B cell (primary cell): ENCODE measurements at regions of chr20 and their contacts with region 1.

Region 1: GRCh38 chr20:62121776-62122631 is at the start of gene LSM14B:
- DNase-seq: peak; percentile 99
- ATAC-seq: peak; percentile 86
- H3K4me3 ChIP-seq: peak within 1 kb of the TSS; percentile 36 to 78 (median 62)
- H3K4me3 Mint-ChIP-seq: peak within 1 kb of the TSS; percentile 92
- H3K27ac ChIP-seq: peak within 1 kb of the TSS; percentile 65 to 91
- H3K27ac Mint-ChIP-seq: peak within 1 kb of the TSS; percentile 90
- H3K4me1 ChIP-seq: peaks cover 18 to 29% of the 10 kb centered on the region in 2 donors
- H3K4me1 Mint-ChIP-seq: peaks cover 21% of the 10 kb centered on the region
- H3K27me3 ChIP-seq: no peaks in the 10 kb centered on the region
- H3K27me3 Mint-ChIP-seq: peaks cover 2% of the 10 kb centered on the region
- CTCF ChIP-seq: no peak
- total RNA-seq, gene LSM14B: 52.8 and 55.0 TPM in 2 replicates

Region 2: DNA sequence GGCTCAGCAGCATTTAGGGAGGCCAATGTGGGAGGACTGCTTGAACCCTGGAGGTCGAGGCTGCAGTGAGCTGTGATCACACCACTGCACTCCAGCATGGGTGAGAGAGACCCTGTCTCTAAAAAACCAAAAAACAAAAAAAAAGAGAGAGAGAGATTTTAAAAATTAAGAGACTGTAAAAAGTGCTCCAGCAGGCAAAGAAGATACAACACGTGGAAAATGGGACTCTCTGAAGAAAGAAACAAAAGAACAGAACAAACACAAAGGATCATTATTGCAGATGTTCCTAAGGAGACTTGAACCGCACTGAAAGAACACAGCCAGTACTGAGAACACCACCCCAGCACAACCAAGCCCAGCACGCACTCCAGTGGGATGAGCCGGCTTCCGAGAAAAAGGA is 130.5 kb before region 1 on chr20:
- CTCF ChIA-PET with region 1: no interaction called
- POLR2A ChIA-PET with region 1: no interaction called
- intact Hi-C with region 1: no loop called
- DNase-seq: no peak
- ATAC-seq: no peak
- H3K4me3 ChIP-seq: no peak overlapping the region
- H3K4me3 Mint-ChIP-seq: no peak overlapping the region
- H3K27ac ChIP-seq: no peak overlapping the region
- H3K27ac Mint-ChIP-seq: no peak overlapping the region
- H3K4me1 ChIP-seq: no peaks in the 10 kb centered on the region
- H3K4me1 Mint-ChIP-seq: peaks cover 6% of the 10 kb centered on the region
- H3K27me3 ChIP-seq: no peaks in the 10 kb centered on the region
- H3K27me3 Mint-ChIP-seq: no peaks in the 10 kb centered on the region
- CTCF ChIP-seq: no peak

Region 3: GRCh38 chr20:62010551-62011402 is 111.2 kb before region 1 on chr20:
- CTCF ChIA-PET with region 1: interaction called, 10 read pairs
- POLR2A ChIA-PET with region 1: no interaction called
- intact Hi-C with region 1: no loop called
- DNase-seq: peak; percentile 72
- ATAC-seq: peak; percentile 66
- H3K4me3 ChIP-seq: no peak overlapping the region
- H3K4me3 Mint-ChIP-seq: no peak overlapping the region
- H3K27ac ChIP-seq: no peak overlapping the region
- H3K27ac Mint-ChIP-seq: peak overlapping the region; percentile 62
- H3K4me1 ChIP-seq: peaks cover 0 to 3% of the 10 kb centered on the region in 2 donors
- H3K4me1 Mint-ChIP-seq: peaks cover 5% of the 10 kb centered on the region
- H3K27me3 ChIP-seq: no peaks in the 10 kb centered on the region
- H3K27me3 Mint-ChIP-seq: no peaks in the 10 kb centered on the region
- CTCF ChIP-seq: peak; percentile 84

Region 4: DNA sequence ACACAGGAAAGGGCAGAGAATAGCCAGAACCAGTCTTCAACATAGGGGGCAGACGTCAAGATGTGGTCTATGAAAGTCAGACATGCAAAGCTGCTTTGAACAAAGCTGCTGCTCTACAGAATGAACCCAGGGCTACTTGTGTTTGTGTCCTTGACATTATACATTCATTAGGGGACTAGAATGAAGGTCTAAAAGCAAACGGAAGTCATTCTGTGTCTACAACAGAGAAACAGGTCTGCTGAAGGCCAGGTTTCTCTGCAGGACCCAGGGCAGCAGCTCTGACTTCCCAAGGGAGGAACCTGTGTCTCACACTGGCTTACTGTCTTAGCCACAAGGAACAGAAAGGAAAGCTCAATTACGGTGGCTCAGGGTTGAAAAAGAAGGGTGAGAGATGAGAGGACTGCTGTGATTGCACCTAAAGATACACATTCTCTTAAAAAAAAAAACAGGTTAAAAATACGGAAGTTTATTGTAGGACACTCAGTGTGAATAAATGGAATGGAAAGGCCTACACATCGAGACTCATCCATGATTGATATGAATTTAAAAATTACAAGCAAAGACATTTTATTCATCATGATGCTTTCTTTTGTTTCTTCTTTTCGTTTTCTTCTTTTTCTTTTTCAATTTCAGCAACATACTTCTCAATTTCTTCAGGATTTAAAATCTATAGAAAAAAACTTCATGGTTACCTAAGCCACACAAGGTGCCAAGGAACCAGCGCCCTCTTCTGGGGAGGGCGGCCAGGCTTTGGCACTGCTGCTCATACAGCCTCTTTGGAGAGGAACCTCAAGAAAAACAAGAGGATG is 14.5 kb after region 1 on chr20:
- CTCF ChIA-PET with region 1: interaction called, 11 read pairs
- POLR2A ChIA-PET with region 1: no interaction called
- intact Hi-C with region 1: loop called (anchors 1 kb)
- DNase-seq: peak; percentile 80
- ATAC-seq: peak; percentile 81
- H3K4me3 ChIP-seq: no peak overlapping the region
- H3K4me3 Mint-ChIP-seq: no peak overlapping the region
- H3K27ac ChIP-seq: peak overlapping the region in 1 of 2 donors; percentile 25
- H3K27ac Mint-ChIP-seq: peak overlapping the region; percentile 63
- H3K4me1 ChIP-seq: peaks cover 9 to 24% of the 10 kb centered on the region in 2 donors
- H3K4me1 Mint-ChIP-seq: peaks cover 32% of the 10 kb centered on the region
- H3K27me3 ChIP-seq: no peaks in the 10 kb centered on the region
- H3K27me3 Mint-ChIP-seq: no peaks in the 10 kb centered on the region
- CTCF ChIP-seq: peak; percentile 86

Region 5: GRCh38 chr20:62156592-62157386 is 34.8 kb after region 1 on chr20:
- CTCF ChIA-PET with region 1: no interaction called
- POLR2A ChIA-PET with region 1: no interaction called
- intact Hi-C with region 1: no loop called
- DNase-seq: peak; percentile 70
- ATAC-seq: peak; percentile 95
- H3K4me3 ChIP-seq: no peak overlapping the region
- H3K4me3 Mint-ChIP-seq: no peak overlapping the region
- H3K27ac ChIP-seq: no peak overlapping the region
- H3K27ac Mint-ChIP-seq: no peak overlapping the region
- H3K4me1 ChIP-seq: peaks cover 0 to 4% of the 10 kb centered on the region in 2 donors
- H3K4me1 Mint-ChIP-seq: peaks cover 11% of the 10 kb centered on the region
- H3K27me3 ChIP-seq: no peaks in the 10 kb centered on the region
- H3K27me3 Mint-ChIP-seq: no peaks in the 10 kb centered on the region
- CTCF ChIP-seq: peak; percentile 66

Region 6: GRCh38 chr20:62182613-62183425 is 60.8 kb after region 1 on chr20 and contains the start of gene MTG2:
- CTCF ChIA-PET with region 1: no interaction called
- POLR2A ChIA-PET with region 1: no interaction called
- intact Hi-C with region 1: loop called (anchors 2 kb)
- DNase-seq: peak; percentile 96
- ATAC-seq: peak; percentile 90
- H3K4me3 ChIP-seq: peak within 1 kb of the TSS; percentile 81 to 88 (median 84)
- H3K4me3 Mint-ChIP-seq: peak within 1 kb of the TSS; percentile 97
- H3K27ac ChIP-seq: peak within 1 kb of the TSS; percentile 86 to 97
- H3K27ac Mint-ChIP-seq: peak within 1 kb of the TSS; percentile 98
- H3K4me1 ChIP-seq: peaks cover 13 to 18% of the 10 kb centered on the region in 2 donors
- H3K4me1 Mint-ChIP-seq: peaks cover 39% of the 10 kb centered on the region
- H3K27me3 ChIP-seq: no peaks in the 10 kb centered on the region
- H3K27me3 Mint-ChIP-seq: no peaks in the 10 kb centered on the region
- CTCF ChIP-seq: no peak
- total RNA-seq, gene MTG2: 47.6 and 48.4 TPM in 2 replicates

Region 7: DNA sequence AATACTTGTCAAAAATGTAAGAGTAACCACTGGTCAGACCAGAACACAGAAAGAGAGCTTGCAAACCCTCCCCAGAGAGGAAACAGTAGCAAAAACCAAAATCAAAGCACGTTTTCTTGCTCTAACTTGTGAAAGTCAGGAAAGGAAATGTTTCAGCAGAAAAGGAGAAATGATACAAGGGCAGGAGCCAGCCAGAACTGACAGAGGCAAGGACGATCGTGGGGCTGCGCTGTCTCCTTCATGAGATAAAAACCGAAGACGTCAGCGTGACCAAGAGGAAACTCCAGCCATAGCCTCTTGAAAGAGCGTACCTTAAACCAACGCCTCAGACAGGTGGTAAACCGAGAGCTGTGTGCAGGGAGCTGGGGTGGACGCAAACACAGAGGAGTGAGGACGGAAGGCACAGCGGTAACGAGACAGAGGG is 217.7 kb after region 1 on chr20:
- CTCF ChIA-PET with region 1: no interaction called
- POLR2A ChIA-PET with region 1: no interaction called
- intact Hi-C with region 1: no loop called
- DNase-seq: peak; percentile 90
- ATAC-seq: peak; percentile 59
- H3K4me3 ChIP-seq: peak overlapping the region in 4 of 5 experiments; percentile 31 to 68 (median 50)
- H3K4me3 Mint-ChIP-seq: peak overlapping the region; percentile 84
- H3K27ac ChIP-seq: peak overlapping the region; percentile 86 to 87
- H3K27ac Mint-ChIP-seq: peak overlapping the region; percentile 95
- H3K4me1 ChIP-seq: peaks cover 53 to 61% of the 10 kb centered on the region in 2 donors
- H3K4me1 Mint-ChIP-seq: peaks cover 48% of the 10 kb centered on the region
- H3K27me3 ChIP-seq: no peaks in the 10 kb centered on the region
- H3K27me3 Mint-ChIP-seq: no peaks in the 10 kb centered on the region
- CTCF ChIP-seq: no peak

Region 8: GRCh38 chr20:62386383-62387218 is 264.6 kb after region 1 on chr20 and contains the start of gene RPS21:
- CTCF ChIA-PET with region 1: no interaction called
- POLR2A ChIA-PET with region 1: no interaction called
- intact Hi-C with region 1: loop called (anchors 10 kb)
- DNase-seq: peak; percentile 95
- ATAC-seq: peak; percentile 87
- H3K4me3 ChIP-seq: peak within 1 kb of the TSS; percentile 78 to 93 (median 91)
- H3K4me3 Mint-ChIP-seq: peak within 1 kb of the TSS; percentile 94
- H3K27ac ChIP-seq: peak within 1 kb of the TSS; percentile 88 to 89
- H3K27ac Mint-ChIP-seq: peak within 1 kb of the TSS; percentile 94
- H3K4me1 ChIP-seq: peaks cover 18 to 34% of the 10 kb centered on the region in 2 donors
- H3K4me1 Mint-ChIP-seq: peaks cover 48% of the 10 kb centered on the region
- H3K27me3 ChIP-seq: no peaks in the 10 kb centered on the region
- H3K27me3 Mint-ChIP-seq: no peaks in the 10 kb centered on the region
- CTCF ChIP-seq: no peak
- total RNA-seq, gene RPS21: 2,429 and 2,653 TPM in 2 replicates